ENCODE measurements at regions of chr1 and their contacts with region 1.

Region 1: GRCh38 chr1:221567859-221568507 is 173.9 kb downstream of the DUSP10 start:
- DNase-seq: no peak
- ATAC-seq: no peak

Region 2: DNA sequence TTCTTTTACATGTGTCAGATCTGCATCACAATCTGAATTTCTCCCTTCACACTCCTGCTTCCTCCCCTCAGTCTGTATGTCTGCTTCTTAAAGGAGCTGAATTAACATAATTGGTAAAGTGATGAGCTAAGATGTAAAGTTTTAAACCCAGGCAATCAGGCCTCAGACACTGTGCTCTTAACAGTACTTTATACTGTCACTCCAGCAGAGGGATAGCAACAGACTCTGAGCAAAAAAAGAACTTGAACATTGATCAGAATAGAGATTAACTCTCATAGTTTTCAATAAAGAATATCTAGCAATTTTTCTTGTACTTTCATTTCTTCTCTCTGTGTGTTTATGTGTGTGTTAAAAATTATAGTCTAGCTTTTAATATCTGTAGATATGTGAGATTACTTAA is 63.6 kb after region 1 on chr1:
- intact Hi-C with region 1: no loop called
- DNase-seq: no peak
- ATAC-seq: no peak

Region 3: GRCh38 chr1:221725735-221726672 is 158.0 kb after region 1 on chr1:
- intact Hi-C with region 1: loop called in 1 of 2 experiments (anchors 5 kb)
- DNase-seq: no peak
- ATAC-seq: peak in 1 of 2 donors; percentile 50